Activated CD4-positive, alpha-beta memory T cell treated with anti-CD3 and anti-CD28 coated beads for 36 hours (primary cell): ENCODE measurements at regions of chr12 and their contacts with region 1.

Region 1: DNA sequence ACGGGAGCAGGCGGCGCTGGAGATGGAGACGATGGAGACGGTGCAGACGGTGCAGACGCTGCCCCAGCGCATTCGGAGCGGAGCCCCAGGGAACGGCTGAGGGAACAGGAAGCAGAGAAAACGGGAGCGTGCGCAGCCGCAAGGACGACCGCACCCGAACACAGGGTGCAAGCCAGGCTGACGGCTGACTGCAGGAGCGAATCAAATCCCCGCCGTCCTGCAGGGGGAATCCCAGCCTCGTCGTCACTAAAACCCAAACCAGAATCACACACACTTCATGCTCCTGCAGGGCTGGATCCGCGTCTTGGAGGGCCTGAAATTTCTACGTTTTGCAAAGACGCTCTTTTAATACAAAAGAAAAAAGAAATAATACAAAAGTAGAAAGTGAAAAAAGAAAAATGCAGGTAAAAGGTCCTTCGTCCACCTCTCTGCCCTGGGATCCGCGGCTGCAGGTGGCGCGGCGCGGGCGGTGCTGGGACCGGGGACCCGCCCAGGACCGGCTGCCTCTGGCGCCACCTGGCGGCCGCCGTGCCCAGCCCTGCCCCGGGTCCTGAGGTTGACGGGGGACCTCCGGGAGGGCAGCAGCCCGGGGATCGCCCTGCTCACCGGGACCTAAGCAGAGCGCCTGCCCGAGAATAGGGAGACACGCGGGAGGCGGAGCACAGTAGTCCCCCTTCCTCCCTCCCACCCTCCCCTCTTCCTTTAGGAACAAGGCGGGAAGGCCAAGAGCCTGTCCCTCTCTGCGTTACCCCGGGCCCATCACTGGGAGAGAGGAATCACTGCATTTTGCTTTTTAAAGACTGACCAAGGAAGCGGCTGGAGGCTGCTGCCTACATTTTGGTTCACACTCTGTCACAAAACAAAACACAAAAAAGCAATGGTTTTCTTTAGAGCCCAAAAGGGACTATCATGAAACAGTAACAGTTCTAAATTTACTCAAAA is 20.1 kb downstream of the STX2 start:
- DNase-seq: peak; percentile 81
- H3K4me3 Mint-ChIP-seq: peak overlapping the region; percentile 81
- H3K27ac Mint-ChIP-seq: peak overlapping the region; percentile 74
- H3K4me1 Mint-ChIP-seq: peaks cover 7% of the 10 kb centered on the region
- H3K27me3 Mint-ChIP-seq: no peaks in the 10 kb centered on the region

Region 2: DNA sequence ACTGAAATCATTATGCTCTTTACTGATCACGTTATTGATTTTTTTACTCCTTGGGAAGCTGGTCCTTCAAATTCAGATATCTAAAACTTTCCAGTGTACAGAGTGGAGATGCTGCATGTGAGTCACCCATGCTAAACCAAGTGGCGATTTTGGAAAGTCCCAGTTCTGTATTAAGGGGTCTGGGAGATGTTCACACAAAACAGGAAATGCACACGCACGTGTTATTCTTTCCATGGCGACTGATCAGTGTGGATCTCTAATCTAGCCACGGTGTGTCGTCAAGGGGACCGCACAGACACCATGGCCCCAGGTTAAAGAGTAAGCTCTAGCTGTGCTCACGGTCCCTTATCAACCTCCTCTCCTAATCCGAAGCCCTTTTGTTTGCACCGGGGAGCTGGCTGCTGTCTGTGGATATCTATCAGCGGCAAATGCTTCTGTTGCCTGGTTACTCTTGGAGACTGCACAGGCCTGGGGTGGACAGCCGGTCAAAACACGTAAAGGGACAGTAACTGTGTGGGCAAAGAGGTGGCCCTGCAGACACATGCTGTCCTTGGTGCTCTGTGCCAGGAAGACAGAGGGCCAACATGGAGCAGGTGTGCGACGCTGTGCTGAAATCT is 199.4 kb before region 1 on chr12:
- CTCF ChIA-PET with region 1: no interaction called
- POLR2A ChIA-PET with region 1: no interaction called
- intact Hi-C with region 1: no loop called
- DNase-seq: no peak
- H3K4me3 Mint-ChIP-seq: no peak overlapping the region
- H3K27ac Mint-ChIP-seq: no peak overlapping the region
- H3K4me1 Mint-ChIP-seq: no peaks in the 10 kb centered on the region
- H3K27me3 Mint-ChIP-seq: peaks cover 2% of the 10 kb centered on the region

Region 3: DNA sequence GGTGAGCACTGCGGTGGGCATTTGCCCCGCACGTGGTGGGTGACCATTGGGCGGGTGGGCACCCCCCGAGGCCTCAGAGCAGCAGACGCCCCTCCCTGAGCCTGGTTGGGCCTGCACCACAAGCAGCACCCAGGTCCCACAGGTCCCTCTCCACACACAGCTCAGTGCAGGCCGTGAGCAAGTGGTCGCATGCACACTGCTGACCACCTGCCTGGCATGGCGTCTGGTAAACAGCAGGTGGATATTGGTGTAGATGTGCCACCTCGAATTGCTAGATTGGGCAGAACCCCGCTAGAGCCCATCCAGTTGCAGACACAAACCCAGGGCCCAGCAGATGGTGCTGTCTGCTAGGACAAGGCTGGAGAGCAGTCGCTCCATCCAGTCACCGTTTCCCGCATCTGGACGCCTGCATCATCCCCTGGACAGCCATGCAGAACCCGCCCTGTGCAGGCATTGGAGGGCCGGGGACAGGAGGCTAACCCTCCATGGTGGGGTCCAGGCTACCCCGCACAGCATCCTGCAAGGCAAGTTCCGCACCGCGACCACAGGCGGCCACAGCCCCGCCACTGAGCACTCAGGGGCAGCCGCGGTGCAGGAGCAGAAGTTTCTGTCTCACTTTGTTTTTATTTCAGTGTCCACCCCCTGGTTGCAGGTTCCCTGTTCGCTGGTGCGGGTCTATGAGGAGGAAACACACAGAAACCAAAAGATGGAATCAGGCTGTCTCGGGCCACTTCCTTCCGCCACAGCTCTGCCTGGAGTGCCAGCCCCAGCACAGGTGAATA is 57.2 kb before region 1 on chr12:
- CTCF ChIA-PET with region 1: interaction called, 8 read pairs
- POLR2A ChIA-PET with region 1: no interaction called
- intact Hi-C with region 1: loop called (anchors 1 kb)
- DNase-seq: peak; percentile 79
- H3K4me3 Mint-ChIP-seq: peak overlapping the region; percentile 66
- H3K27ac Mint-ChIP-seq: no peak overlapping the region
- H3K4me1 Mint-ChIP-seq: peaks cover 3% of the 10 kb centered on the region
- H3K27me3 Mint-ChIP-seq: peaks cover 4% of the 10 kb centered on the region

Region 4: DNA sequence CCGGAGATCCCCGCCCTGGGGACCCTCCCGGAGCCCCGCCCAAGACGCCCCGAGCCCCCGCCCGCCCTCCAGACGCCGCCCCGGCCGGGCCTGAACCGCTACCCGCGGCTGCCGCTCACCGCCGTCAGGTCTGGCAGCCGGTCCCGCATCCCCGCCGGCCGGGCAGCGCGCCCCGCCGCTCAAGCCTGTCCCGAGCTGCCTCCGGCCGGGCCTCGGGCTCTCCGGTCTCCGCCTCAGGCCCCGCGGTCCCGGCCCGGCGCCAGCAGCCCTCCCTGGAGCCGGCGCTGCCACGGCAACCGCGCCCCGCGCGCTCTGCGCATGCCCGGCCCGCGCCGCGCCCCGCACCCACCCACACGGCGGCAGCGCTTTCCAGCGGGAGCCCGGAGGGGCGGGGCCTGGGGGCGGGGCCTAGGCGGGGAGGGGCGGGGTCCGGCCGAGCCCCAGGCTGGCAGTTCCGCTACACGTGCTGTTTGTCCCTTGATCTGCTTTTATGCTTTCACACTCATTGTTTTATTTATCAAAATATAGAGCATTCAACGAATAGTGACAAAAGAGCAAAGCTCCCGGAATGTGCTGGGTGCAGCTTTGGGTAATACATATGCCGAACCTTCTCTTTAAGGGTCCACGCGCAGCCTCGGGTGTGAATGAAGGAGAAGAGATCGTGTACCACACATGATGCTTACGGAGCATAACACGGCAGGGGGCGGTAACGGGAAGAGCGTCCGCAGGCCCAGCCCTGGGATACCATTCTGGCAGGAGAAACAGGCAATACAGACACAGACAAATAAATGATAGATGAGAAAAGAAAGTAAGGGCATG is 20.3 kb after region 1 on chr12 and contains the start of gene STX2:
- CTCF ChIA-PET with region 1: interaction called, 10 read pairs
- POLR2A ChIA-PET with region 1: interaction called, 3 read pairs
- intact Hi-C with region 1: no loop called
- DNase-seq: peak; percentile 92
- H3K4me3 Mint-ChIP-seq: peak within 1 kb of the TSS; percentile 79
- H3K27ac Mint-ChIP-seq: peak within 1 kb of the TSS; percentile 46
- H3K4me1 Mint-ChIP-seq: peaks cover 35% of the 10 kb centered on the region
- H3K27me3 Mint-ChIP-seq: no peaks in the 10 kb centered on the region
- total RNA-seq, gene STX2: 18.1 to 22.8 TPM

Region 5: GRCh38 chr12:131285031-131285430 is 466.1 kb after region 1 on chr12:
- CTCF ChIA-PET with region 1: no interaction called
- POLR2A ChIA-PET with region 1: no interaction called
- intact Hi-C with region 1: no loop called
- DNase-seq: no peak
- H3K4me3 Mint-ChIP-seq: no peak overlapping the region
- H3K27ac Mint-ChIP-seq: no peak overlapping the region
- H3K4me1 Mint-ChIP-seq: no peaks in the 10 kb centered on the region
- H3K27me3 Mint-ChIP-seq: peaks cover 1% of the 10 kb centered on the region